ENCODE measurements at regions of chr2 and their contacts with region 1.

Region 1: GRCh38 chr2:9095690-9096351 is 92.3 kb upstream of the MBOAT2 start:
- DNase-seq: peak in 1 of 2 experiments; percentile 71
- H3K4me3 ChIP-seq: peak overlapping the region in 1 of 4 experiments; percentile 45; a peak in 2 of 8 replicates
- H3K27ac ChIP-seq: no peak overlapping the region
- H3K4me1 ChIP-seq: peaks cover 0 to 12% (median 9%) of the 10 kb centered on the region in 4 experiments; a peak in 6 of 7 replicates
- H3K27me3 ChIP-seq: peaks cover 0 to 8% (median 3%) of the 10 kb centered on the region in 4 experiments; a peak in 3 of 7 replicates
- CTCF ChIP-seq: peak; percentile 20 to 38 (median 28); a peak in 3 of 4 replicates
- EP300 ChIP-seq: no peak
- POLR2A ChIP-seq: no peak
- RAD21 ChIP-seq: peak; percentile 50 to 56

Region 2: DNA sequence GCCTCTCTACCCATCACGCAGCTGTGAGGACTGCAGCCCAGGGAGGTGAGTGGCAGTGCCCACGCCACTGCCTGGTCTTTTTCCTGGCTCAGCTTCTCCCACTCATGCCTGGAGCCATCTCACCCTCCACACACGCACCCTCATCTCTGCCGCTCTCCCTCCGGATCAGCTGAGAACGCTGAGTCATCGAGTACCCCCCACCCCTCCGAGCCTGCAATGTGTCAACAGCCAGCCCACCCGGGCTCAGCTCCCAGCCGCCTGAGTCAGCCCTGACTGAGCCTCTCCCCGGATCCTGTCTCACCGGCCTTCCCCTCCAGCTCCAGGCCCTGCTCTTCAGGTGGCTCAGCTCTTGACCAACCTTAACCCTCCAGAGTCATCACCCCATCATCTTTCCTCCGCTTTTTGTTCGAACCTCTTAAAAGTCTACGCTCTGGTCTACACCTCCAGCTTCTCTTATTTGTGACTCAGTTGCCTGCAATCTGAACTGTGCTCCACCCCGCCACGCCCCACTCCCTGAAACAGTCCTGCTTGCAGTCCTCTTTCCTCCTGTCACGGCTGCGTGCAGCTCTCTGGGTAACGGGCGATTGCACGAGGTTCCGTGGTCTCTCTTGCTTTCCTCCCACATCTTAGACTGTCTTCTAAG is 16.4 kb after region 1 on chr2:
- CTCF ChIA-PET with region 1: interaction called, 75 read pairs
- POLR2A ChIA-PET with region 1: no interaction called
- DNase-seq: no peak
- H3K4me3 ChIP-seq: no peak overlapping the region
- H3K27ac ChIP-seq: no peak overlapping the region
- H3K4me1 ChIP-seq: peaks cover 0 to 5% (median under 1%) of the 10 kb centered on the region in 4 experiments; a peak in 2 of 7 replicates
- H3K27me3 ChIP-seq: no peaks in the 10 kb centered on the region; a peak in 1 of 7 replicates
- CTCF ChIP-seq: no peak
- EP300 ChIP-seq: no peak
- POLR2A ChIP-seq: no peak
- RAD21 ChIP-seq: no peak

Measured in H1 (cell line).